GM12878 (cell line): ENCODE measurements at regions of chr22 and their contacts with region 1.

Region 1: GRCh38 chr22:43750791-43751190 is 61.3 kb downstream of the EFCAB6 start:
- DNase-seq: peak; percentile 32
- ATAC-seq: peak; percentile 80
- H3K4me3 ChIP-seq: no peak overlapping the region
- H3K27ac ChIP-seq: no peak overlapping the region
- H3K4me1 ChIP-seq: no peaks in the 10 kb centered on the region
- H3K27me3 ChIP-seq: no peaks in the 10 kb centered on the region
- CTCF ChIP-seq: no peak
- EP300 ChIP-seq: 0 out of 4 replicates have a peak, but pooled peaks of 1 of the 2 experiments have one; percentile 37
- POLR2A ChIP-seq: no peak
- RAD21 ChIP-seq: no peak

Region 2: DNA sequence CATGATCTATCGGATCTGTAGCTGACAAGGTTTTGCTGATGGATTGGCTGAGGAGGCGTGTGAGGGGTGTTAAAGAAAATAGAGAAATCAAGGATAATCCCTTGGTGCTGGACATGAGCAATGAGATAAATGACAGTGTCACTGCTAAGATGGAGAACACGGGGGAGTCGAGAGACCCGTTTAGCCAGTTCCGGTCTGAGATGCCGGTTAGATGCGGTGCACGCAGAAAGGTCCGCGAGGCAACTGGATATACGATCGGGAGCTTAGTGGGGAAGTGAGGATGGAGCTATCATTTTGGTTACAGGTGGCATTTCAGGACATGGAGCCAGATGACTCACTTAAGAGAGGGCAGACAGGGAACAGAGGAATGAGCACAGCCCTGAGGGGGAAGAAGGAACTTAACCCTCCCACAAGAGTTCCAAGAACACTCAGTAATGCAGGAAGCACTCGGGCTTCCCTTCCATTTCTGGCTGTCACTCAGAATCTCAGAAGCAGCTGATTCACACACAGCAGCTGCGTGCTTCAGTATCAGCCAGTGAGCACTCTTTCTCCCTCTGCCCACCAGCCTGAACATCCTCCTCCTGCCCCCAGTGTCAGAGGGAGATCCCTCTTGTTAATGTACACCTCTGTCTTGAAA is 26.4 kb after region 1 on chr22:
- CTCF ChIA-PET with region 1: no interaction called
- POLR2A ChIA-PET with region 1: no interaction called
- RAD21 ChIA-PET with region 1: interaction called, 10 read pairs
- SMC1A ChIA-PET with region 1: interaction called, 5 read pairs
- in situ Hi-C with region 1: no loop called
- intact Hi-C with region 1: no loop called
- DNase-seq: no peak
- ATAC-seq: no peak
- H3K4me3 ChIP-seq: no peak overlapping the region
- H3K27ac ChIP-seq: no peak overlapping the region
- H3K4me1 ChIP-seq: no peaks in the 10 kb centered on the region
- H3K27me3 ChIP-seq: no peaks in the 10 kb centered on the region
- CTCF ChIP-seq: no peak
- EP300 ChIP-seq: no peak
- POLR2A ChIP-seq: no peak
- RAD21 ChIP-seq: no peak

Region 3: DNA sequence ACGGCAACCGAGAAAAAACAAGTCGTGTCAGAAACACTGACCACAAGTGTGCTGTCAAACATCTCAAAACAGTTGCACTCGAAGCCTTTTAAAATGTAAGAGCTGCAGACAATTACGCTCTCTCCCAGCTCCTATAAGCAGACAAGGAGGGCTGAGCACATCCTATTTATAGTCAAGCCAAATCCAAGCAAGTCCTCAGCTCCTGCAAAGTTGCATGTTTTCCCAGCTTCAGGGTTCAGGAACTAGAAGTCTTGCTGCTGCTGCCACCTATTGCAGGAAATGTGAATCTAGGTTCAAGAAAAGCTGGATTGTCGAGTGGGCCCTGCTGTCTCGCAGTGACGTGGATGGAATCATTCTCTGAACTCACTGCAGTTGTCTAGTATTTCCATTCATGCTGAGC is 45.8 kb after region 1 on chr22:
- CTCF ChIA-PET with region 1: interaction called, 12 read pairs
- POLR2A ChIA-PET with region 1: interaction called, 3 read pairs
- RAD21 ChIA-PET with region 1: interaction called, 6 read pairs
- SMC1A ChIA-PET with region 1: interaction called, 5 read pairs
- in situ Hi-C with region 1: no loop called
- intact Hi-C with region 1: no loop called
- DNase-seq: no peak
- ATAC-seq: no peak
- H3K4me3 ChIP-seq: no peak overlapping the region
- H3K27ac ChIP-seq: no peak overlapping the region
- H3K4me1 ChIP-seq: peaks cover 13% of the 10 kb centered on the region
- H3K27me3 ChIP-seq: no peaks in the 10 kb centered on the region
- CTCF ChIP-seq: peak; percentile 12 to 44 (median 22); a peak in 4 of 6 replicates
- EP300 ChIP-seq: no peak
- POLR2A ChIP-seq: no peak
- RAD21 ChIP-seq: peak; percentile 25; the same call in 1 of the 2 replicates

Region 4: DNA sequence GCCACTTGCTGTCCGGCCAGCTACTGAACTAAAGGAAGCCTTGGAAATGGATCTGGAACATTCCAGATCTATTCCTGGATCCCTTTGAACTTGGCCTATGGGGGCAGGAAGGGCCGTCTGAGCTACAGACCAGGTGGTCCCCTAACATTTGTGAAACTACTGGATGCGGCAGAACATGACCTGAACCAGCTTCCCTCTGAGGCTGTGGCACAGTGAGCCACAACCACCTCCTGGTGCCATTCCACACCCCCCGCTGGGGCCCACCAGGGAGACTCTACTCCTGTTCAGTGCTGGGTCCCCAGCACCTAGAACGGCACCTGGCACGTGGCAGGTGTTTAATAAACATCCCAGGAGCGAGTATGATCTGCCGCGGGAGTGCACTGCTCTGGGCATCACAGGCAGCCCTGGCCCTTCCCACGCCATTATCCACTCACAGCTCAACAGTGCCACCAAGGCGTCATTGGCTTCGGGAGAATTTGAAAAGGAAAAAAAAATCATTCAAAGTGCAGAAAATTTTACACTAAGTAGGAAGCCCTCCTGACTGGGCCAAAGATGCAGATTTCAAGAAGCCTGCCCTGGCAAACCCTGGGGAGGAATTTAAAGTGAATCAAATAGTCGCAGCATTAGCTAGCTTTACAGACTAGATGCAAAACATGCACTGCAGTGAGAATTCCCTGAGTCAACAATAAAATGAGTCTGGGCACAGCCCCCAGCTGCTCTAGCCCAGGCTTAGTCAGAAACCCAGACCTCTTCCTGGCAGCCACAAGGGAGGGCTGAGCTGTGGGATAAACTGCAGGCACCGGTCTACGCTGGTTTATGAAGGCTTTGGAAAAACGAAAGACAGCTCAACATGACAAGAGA is 75.6 kb after region 1 on chr22:
- CTCF ChIA-PET with region 1: interaction called, 7 read pairs
- POLR2A ChIA-PET with region 1: no interaction called
- RAD21 ChIA-PET with region 1: interaction called, 4 read pairs
- SMC1A ChIA-PET with region 1: interaction called, 6 read pairs
- in situ Hi-C with region 1: no loop called
- intact Hi-C with region 1: loop called (anchors 5 kb)
- DNase-seq: no peak
- ATAC-seq: peak; percentile 34; the same call in 1 of the 3 replicates
- H3K4me3 ChIP-seq: no peak overlapping the region
- H3K27ac ChIP-seq: no peak overlapping the region
- H3K4me1 ChIP-seq: no peaks in the 10 kb centered on the region
- H3K27me3 ChIP-seq: no peaks in the 10 kb centered on the region; a peak in 1 of 4 replicates
- CTCF ChIP-seq: peak; percentile 25 to 56 (median 37); a peak in 4 of 6 replicates
- EP300 ChIP-seq: no peak
- POLR2A ChIP-seq: no peak
- RAD21 ChIP-seq: peak; percentile 71